Common myeloid progenitor, CD34-positive (primary cell): ENCODE measurements at regions of chr15 and their contacts with region 1.

Region 1: GRCh38 chr15:68783226-68784058 is 37.3 kb downstream of the ANP32A start:
- DNase-seq: peak; percentile 56 to 67 (median 66)
- H3K4me3 ChIP-seq: peak overlapping the region in 2 of 7 experiments; percentile 1 to 35
- H3K27ac ChIP-seq: peak overlapping the region; percentile 18 to 75
- H3K4me1 ChIP-seq: peaks cover 20 to 79% (median 73%) of the 10 kb centered on the region in 4 experiments
- H3K27me3 ChIP-seq: no peaks in the 10 kb centered on the region

Region 2: DNA sequence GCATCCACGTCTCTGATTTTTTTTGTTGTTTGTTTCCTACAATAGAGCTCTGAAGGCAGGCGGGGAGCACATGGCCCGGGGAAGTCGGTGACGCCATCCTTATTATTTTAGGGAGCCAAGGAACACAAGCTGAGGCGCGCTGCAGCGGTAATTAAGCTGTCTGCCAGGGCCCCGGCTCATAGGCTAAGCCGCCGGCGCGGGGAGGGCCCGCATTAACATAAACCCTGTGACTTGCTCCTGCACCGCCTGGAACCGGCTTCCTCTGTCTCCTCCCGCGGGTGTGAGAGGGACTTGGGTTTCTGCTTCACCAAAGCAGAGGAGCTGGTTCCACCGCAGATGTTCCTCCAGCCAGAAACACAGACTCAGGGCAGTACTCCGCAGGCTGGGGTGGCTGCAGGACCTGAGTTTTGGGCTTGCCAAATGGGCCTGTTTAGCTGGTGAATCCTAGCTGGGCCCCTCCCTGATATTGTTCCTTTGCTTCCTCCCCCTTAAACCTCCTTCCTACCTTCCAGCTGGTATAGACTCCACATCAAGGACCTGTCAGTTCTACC is 11.9 kb after region 1 on chr15:
- CTCF ChIA-PET with region 1: interaction called, 33 read pairs
- POLR2A ChIA-PET with region 1: interaction called, 3 read pairs
- DNase-seq: peak in 2 of 3 donors; percentile 87 to 88
- H3K4me3 ChIP-seq: peak overlapping the region in 6 of 7 experiments; percentile 1 to 60 (median 35)
- H3K27ac ChIP-seq: peak overlapping the region in 1 of 2 experiments; percentile 60
- H3K4me1 ChIP-seq: peaks cover 29 to 93% (median 73%) of the 10 kb centered on the region in 4 experiments
- H3K27me3 ChIP-seq: no peaks in the 10 kb centered on the region

Region 3: DNA sequence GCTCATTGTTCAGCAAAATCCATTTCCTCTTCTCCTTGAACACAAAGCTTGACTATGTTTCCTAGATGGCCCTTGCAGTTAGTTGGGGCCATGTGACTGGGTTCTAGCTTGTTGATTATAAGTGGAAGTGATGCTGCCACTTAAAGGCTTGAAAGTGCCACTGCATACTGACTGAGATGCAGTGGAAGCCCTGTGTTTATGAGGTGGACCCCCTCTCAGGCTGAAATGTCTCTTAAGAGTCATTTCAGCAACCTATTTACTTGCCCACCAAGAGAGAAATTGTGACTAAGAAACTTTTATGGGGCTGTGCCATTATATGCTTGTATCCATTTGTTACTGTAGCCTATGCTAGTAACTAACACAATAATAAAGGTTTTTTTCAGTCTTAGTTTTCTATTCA is 45.6 kb after region 1 on chr15:
- CTCF ChIA-PET with region 1: interaction called, 39 read pairs
- POLR2A ChIA-PET with region 1: no interaction called
- DNase-seq: peak in 2 of 3 donors; percentile 67 to 70
- H3K4me3 ChIP-seq: no peak overlapping the region
- H3K27ac ChIP-seq: no peak overlapping the region
- H3K4me1 ChIP-seq: peaks cover 2 to 23% (median 9%) of the 10 kb centered on the region in 4 experiments
- H3K27me3 ChIP-seq: no peaks in the 10 kb centered on the region